GM10248 (cell line): ENCODE measurements at regions of chr1 and their contacts with region 1.

Region 1: DNA sequence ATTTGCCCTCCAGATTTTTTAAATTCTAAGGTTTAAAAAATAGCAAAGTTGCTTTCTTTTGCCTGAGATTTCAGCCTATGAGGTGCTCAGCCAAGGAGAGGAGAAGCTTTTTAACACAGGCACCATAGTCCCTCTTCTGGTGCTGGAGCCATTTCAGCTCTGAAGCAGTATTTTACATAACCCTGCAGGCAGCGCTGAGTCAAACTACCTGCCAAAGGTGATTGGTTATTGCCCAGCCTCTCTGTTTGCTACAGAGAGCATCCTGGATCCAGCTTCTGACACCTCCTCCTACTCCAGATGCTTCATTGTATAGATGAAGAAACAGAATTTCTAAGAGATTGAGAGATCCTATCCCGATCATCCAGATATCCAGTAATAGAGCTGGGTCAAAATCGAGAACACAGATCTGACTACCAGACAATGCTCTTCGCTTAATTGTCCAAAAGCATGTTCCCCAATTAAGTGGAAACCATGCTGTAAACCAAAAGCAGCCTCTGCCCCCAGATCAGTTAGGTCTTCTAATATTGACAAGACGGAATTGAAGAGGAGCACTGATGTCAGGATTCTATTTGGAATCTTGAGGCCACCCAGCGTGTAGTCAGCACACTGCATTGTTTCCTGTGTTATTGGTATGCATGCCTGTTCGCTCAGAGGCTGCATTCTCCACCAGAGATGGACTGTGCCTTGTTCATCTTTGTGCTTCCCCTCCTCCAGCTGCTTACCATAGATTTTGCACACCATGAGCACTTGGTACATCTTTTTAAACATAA is 22.1 kb downstream of the RGS8 start:
- DNase-seq: no peak
- CTCF ChIP-seq: no peak

Region 2: DNA sequence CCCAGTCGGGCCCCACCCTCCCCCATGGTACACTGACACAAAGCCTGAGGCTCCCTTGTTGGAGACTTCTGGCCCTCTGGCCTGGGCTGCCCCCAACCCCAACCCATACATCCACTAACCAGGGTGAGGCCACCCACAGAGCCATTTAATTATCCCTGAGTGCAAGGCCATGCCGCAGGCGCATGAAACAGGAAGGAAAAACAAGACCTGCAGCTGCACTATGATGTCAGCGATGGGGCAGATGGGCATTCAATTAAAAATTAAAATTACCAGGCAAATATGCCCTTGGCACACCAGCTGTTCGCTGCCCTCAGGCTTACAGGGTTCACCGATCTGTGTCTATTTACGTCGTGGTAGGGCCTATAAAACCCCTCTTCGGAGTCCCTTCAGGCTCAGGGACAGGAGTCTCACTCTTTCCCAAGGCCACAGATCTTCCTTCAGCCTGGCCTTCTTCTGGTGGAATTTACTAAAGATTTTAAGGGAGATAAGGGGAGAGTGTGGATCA is 28.6 kb before region 1 on chr1:
- CTCF ChIA-PET with region 1: no interaction called
- POLR2A ChIA-PET with region 1: no interaction called
- DNase-seq: no peak
- CTCF ChIP-seq: no peak

Region 3: GRCh38 chr1:182677397-182678098 is 15.2 kb after region 1 on chr1:
- CTCF ChIA-PET with region 1: interaction called, 22 read pairs
- POLR2A ChIA-PET with region 1: no interaction called
- DNase-seq: peak; percentile 68
- CTCF ChIP-seq: no peak